GM10248 (cell line): ENCODE measurements at regions of chr18 and their contacts with region 1.

Region 1: DNA sequence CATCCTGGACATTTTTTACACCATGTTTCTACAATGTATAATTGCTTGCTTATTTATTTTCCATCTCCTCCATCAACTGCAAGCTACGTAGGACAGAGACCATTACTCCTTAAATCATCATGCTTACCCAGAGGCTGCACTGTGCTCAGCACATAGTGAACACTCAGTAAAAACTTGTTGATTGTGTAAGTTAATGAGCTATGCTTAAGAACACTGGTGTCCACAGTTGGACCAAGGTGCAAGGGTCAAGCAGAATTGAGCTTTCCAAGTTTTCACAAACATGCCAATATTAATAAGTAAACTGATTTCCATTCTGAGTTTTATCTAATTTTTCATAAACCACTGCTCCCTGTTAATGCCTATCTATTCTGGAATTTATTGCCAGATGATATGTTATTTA is 464.2 kb upstream of the TCF4 start:
- DNase-seq: no peak
- CTCF ChIP-seq: no peak

Region 2: DNA sequence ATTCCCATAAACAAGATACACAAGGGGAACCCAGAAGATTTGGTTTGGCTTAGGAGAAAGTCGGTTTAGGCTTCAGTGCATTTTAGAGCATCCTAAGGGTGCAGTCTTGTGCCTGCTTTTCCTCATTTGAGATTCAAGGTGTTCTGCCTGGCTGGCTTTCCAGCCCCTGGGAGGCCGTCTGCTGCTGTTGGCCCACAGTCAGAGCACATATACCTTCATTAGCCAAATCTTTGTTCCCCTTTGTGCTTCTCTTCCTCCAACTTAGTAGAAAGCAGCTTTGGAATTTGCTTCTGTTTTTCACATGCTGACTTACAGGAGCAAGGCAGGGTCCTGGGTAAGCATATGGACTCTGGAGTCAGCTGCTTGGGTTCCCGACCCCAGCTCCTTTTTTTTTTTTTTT is 12.9 kb after region 1 on chr18:
- CTCF ChIA-PET with region 1: interaction called, 16 read pairs
- POLR2A ChIA-PET with region 1: no interaction called
- DNase-seq: no peak
- CTCF ChIP-seq: no peak